Heart left ventricle (tissue), 16 donors: ENCODE measurements at regions of chr19 and their contacts with region 1.

Region 1: DNA sequence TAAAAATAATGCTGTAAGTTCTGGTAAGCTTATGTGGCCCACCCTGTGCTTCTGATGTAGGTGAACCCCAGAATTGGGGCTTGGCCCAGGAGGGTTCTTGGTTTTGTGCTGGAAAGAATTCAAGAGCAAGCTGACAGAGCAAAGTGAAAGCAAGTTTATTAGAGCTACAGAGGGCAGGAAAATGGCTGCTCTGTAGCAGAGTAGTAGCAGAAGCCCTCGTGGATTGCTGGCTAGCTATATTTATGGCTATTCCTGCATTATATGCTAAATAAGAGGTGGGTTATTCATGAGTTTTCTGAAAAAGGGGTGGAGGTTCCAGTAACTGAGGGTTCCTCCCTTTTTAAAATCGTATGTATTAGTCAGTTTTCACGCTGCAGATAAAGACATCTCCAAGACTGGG is 20.6 kb upstream of the ZNF599 start:
- DNase-seq: no peak
- ATAC-seq: no peak
- H3K4me3 ChIP-seq: peak overlapping the region in 1 of 12 donors; percentile 15
- H3K27ac ChIP-seq: no peak overlapping the region
- H3K4me1 ChIP-seq: no peaks in the 10 kb centered on the region
- H3K27me3 ChIP-seq: no peaks in the 10 kb centered on the region
- CTCF ChIP-seq: no peak
- POLR2A ChIP-seq: no peak

Region 2: DNA sequence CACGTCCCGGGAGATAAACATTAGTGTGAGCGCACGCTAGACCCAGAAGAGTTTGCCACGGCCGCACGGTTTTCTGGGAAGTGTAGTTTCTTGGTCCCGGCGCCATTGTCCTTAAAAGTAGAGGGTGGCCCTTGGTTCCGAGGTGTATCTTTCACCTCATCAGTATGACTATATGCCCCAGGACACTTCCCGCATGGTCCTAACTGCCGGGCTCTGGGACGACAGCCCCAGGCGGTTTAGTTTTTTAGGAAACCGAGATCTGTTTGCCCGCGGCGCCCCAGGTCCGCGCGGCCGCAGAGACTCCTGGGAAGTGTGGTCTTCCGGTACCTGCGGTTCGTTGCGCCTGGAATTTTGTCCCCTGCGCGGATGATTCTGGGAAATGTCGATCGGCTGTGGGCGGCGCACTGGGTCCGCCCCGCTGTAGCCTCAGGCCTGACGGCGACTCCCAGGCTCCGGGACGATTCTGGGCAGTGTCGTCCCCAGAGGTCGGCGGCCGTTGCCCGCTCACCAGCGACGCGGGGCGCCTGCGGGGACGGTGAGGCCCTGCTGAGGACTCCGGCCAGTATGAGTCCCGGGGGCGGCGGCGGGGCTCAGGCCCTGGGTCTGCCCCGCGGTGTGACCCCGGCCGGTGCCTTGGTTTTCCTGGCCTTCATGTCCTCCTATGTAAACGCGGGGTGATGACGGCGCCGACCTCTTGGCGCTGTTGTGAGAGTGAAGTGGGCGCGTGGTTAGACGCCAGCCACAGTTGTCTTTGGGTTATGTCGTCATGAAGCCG is 59.6 kb before region 1 on chr19 and contains the start of gene ZNF181:
- intact Hi-C with region 1: no loop called
- DNase-seq: peak; percentile 92 to 94 (median 92)
- ATAC-seq: peak; percentile 93 to 96 (median 94)
- H3K4me3 ChIP-seq: peak within 1 kb of the TSS; percentile 66 to 96 (median 84)
- H3K27ac ChIP-seq: peak within 1 kb of the TSS; percentile 94 to 99 (median 98)
- H3K4me1 ChIP-seq: peaks cover 4 to 31% (median 25%) of the 10 kb centered on the region in 12 donors
- H3K27me3 ChIP-seq: no peaks in the 10 kb centered on the region
- CTCF ChIP-seq: peak in 5 of 12 donors; percentile 7 to 13 (median 11)
- POLR2A ChIP-seq: peak in 1 of 2 donors; percentile 61
- total RNA-seq, gene ZNF181: 14.4 to 46.6 (median 18.8) TPM

Region 3: DNA sequence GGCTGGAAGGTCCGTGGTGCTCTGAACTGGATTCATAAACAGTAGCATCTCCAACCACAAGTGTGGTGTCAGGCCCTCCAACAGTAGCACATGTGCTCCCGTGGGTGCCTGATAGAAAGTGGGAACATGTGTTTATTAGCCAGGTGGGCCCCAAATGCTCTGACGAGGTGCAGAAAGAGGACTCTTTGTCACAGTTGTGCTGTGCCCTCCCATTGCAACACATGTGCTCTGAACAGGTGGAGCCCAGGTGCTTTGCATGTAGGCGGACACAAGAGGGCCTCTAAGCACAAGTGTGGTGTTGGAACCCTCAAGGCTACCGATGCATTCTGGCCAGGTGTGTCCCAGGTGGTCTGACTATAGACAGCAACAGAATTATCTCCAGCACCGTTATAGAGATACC is 57.8 kb after region 1 on chr19:
- intact Hi-C with region 1: loop called in 1 of 10 experiments (anchors 2 kb)
- DNase-seq: no peak
- ATAC-seq: no peak
- H3K4me3 ChIP-seq: no peak overlapping the region
- H3K27ac ChIP-seq: no peak overlapping the region
- H3K4me1 ChIP-seq: no peaks in the 10 kb centered on the region
- H3K27me3 ChIP-seq: no peaks in the 10 kb centered on the region
- CTCF ChIP-seq: no peak
- POLR2A ChIP-seq: no peak